Activated B cell treated with CpG ODN at 0.5 μM for 24 hours (primary cell): ENCODE measurements at regions of chr7 and their contacts with region 1.

Region 1: DNA sequence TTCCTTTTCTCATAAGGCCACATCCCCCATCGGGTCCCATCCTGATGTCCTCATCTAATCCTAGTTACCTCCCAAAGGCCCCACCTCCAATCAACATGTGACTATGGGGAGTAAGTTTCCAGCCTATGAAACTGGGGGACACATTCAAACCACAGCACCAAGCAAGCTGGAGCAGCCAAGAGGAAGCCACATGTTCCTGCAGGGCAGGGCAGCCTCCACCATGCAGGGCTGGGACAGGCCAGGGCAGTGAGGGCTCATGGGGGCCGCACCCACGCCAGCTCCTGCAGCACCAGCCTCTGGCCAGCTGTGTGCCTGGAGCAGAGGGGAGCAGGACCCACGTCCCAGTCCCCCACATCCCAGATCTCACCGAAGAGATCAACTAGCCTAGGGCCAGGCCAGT is 86.0 kb upstream of the INSIG1 start:
- DNase-seq: no peak
- ATAC-seq: no peak
- H3K4me3 Mint-ChIP-seq: no peak overlapping the region
- H3K27ac Mint-ChIP-seq: no peak overlapping the region
- H3K4me1 Mint-ChIP-seq: peaks cover 8% of the 10 kb centered on the region
- H3K27me3 Mint-ChIP-seq: no peaks in the 10 kb centered on the region
- CTCF ChIP-seq: no peak

Region 2: DNA sequence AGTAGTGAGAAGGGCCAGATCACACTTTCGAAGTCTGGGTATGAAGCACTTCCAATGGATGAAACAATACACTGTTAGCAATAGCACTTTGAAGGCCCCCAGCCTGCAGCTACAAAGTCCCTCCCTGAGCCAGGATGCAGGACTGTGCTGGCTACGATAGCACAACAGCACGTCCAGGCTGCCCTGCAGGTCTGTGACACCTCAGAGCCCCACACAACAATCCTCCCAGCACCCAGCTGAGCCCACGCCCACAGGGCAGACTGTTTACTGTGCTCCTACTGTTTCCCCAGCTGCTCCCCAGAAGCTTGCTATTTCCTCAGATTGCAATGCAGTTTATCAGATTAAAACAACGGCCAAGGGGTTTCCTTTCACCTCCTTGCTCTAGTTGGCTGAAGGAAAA is 70.2 kb before region 1 on chr7:
- CTCF ChIA-PET with region 1: no interaction called
- POLR2A ChIA-PET with region 1: no interaction called
- intact Hi-C with region 1: no loop called
- DNase-seq: no peak
- ATAC-seq: no peak
- H3K4me3 Mint-ChIP-seq: no peak overlapping the region
- H3K27ac Mint-ChIP-seq: no peak overlapping the region
- H3K4me1 Mint-ChIP-seq: no peaks in the 10 kb centered on the region
- H3K27me3 Mint-ChIP-seq: peaks cover 11% of the 10 kb centered on the region
- CTCF ChIP-seq: no peak

Region 3: GRCh38 chr7:155230168-155230593 is 18.5 kb after region 1 on chr7:
- CTCF ChIA-PET with region 1: no interaction called
- POLR2A ChIA-PET with region 1: no interaction called
- intact Hi-C with region 1: no loop called
- DNase-seq: no peak
- ATAC-seq: no peak
- H3K4me3 Mint-ChIP-seq: no peak overlapping the region
- H3K27ac Mint-ChIP-seq: no peak overlapping the region
- H3K4me1 Mint-ChIP-seq: no peaks in the 10 kb centered on the region
- H3K27me3 Mint-ChIP-seq: peaks cover 3% of the 10 kb centered on the region
- CTCF ChIP-seq: no peak

Region 4: DNA sequence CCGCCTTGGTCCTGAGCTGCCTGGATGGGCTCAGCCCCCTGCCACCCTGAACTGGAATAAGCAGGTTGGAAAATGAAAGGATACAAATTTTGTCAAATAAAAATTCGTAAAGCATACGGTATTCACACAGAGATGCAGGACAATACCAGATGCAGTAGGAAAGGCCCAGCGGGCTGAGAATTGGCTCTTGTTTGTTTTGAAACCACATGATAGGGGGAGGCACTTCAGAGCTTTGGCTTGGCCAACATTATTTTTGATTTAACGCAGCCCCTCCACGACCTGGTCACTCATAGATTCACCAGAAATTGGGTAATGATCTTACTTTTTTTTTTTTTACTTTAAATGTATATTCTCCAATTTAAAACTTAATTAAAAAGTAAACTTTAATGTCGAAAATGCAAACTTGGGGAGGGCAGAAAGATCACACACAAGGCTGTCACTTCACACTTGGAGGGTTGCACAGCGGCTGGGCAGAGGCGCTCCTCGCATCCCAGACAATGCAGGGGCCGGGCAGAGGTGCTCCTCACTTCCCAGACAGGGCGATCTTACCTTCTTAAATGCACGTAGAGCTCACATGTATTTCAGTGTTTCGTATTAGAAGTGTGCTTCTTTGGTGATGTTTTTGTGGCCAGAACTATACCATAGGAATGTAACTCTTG is 68.2 kb after region 1 on chr7:
- CTCF ChIA-PET with region 1: no interaction called
- POLR2A ChIA-PET with region 1: interaction called, 10 read pairs
- intact Hi-C with region 1: no loop called
- DNase-seq: no peak
- ATAC-seq: no peak
- H3K4me3 Mint-ChIP-seq: no peak overlapping the region
- H3K27ac Mint-ChIP-seq: no peak overlapping the region
- H3K4me1 Mint-ChIP-seq: peaks cover 15% of the 10 kb centered on the region
- H3K27me3 Mint-ChIP-seq: peaks cover 14% of the 10 kb centered on the region
- CTCF ChIP-seq: no peak